ENCODE measurements at regions of chr7 and their contacts with region 1.

Region 1: DNA sequence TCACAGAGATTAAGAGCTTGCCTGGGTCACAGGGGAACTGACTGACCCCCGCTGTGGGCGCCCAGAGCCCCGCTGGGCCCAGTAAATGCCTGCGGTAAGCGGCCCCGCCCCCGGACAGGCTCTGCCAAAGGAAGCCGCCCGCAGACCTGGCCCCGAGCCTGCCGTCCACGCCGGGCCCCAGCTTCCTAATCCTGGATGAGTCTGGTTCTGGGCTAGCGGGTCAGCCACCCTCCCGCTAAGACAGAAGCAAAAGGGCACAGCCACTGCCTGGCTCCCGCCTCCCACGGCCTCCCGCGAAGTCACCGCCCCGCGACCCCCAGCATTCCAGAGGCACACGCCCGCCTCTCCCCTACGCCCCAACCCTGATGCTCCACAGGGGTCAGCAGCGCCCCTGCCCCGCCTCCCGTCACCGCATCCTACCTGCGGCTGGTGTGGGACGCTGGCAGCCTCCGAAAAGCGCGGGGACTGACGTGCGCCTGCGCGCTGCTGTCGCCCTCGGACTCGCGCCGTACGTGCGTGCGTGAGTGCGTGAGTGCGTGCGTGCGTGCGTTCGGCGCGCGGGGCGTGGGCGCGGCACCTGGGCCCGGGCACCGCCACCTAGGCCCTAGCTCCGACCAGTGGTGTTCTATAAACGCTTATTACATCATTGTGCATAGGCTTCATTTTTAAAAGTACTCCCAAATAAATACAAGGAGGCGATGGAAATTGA is at the start of gene FIGNL1:
- DNase-seq: peak; percentile 90
- H3K4me3 Mint-ChIP-seq: peak within 1 kb of the TSS; percentile 92
- H3K27ac Mint-ChIP-seq: peak within 1 kb of the TSS; percentile 91
- H3K4me1 Mint-ChIP-seq: peaks cover 48% of the 10 kb centered on the region
- H3K27me3 Mint-ChIP-seq: no peaks in the 10 kb centered on the region
- total RNA-seq, gene FIGNL1: 46.2 to 49.0 TPM

Region 2: GRCh38 chr7:50092579-50093491 is 357.2 kb before region 1 on chr7 and contains the start of gene ZPBP:
- CTCF ChIA-PET with region 1: interaction called, 5 read pairs
- POLR2A ChIA-PET with region 1: no interaction called
- intact Hi-C with region 1: loop called (anchors 1 kb)
- DNase-seq: peak; percentile 59
- H3K4me3 Mint-ChIP-seq: peak within 1 kb of the TSS; percentile 75
- H3K27ac Mint-ChIP-seq: peak within 1 kb of the TSS; percentile 62
- H3K4me1 Mint-ChIP-seq: peaks cover 8% of the 10 kb centered on the region
- H3K27me3 Mint-ChIP-seq: no peaks in the 10 kb centered on the region
- total RNA-seq, gene ZPBP: not detected

Region 3: DNA sequence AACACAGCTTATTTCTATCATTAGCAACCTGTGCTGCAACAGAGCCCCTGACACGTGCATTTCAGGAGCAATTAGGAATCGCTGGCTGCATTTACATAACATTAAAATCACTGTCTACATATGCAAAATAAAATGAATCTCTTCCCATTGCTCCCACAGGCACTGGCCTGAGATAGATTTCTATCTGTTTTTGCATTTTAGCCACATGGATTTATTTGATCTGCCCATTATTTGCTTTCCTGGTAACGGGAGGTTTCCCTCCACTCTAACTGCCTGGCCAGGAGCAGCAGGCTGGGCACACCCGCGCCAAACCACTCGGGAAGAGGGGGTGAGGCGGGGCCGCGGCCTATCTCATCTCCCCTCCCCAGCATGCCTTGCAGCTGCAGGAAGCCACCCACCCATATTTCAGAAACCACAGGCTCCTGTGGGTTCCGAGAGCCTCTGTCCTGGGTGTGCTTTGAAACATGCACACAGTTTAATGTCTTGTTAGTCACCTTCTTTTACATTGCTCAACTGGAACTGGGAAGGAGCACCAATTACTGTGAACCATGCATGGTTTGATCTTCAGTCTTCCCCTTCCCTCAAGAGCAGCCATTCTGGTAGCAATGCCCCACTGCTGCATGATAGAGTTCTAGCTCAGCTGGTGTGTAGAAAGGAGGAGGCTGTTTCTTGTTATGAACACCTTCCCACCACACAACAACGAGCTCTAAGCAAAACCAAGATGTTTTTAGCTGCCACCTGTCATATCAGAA is 183.2 kb before region 1 on chr7:
- CTCF ChIA-PET with region 1: no interaction called
- POLR2A ChIA-PET with region 1: no interaction called
- intact Hi-C with region 1: loop called (anchors 5 kb)
- DNase-seq: peak; percentile 90
- H3K4me3 Mint-ChIP-seq: peak overlapping the region; percentile 64
- H3K27ac Mint-ChIP-seq: peak overlapping the region; percentile 96
- H3K4me1 Mint-ChIP-seq: peaks cover 96% of the 10 kb centered on the region
- H3K27me3 Mint-ChIP-seq: no peaks in the 10 kb centered on the region

Region 4: DNA sequence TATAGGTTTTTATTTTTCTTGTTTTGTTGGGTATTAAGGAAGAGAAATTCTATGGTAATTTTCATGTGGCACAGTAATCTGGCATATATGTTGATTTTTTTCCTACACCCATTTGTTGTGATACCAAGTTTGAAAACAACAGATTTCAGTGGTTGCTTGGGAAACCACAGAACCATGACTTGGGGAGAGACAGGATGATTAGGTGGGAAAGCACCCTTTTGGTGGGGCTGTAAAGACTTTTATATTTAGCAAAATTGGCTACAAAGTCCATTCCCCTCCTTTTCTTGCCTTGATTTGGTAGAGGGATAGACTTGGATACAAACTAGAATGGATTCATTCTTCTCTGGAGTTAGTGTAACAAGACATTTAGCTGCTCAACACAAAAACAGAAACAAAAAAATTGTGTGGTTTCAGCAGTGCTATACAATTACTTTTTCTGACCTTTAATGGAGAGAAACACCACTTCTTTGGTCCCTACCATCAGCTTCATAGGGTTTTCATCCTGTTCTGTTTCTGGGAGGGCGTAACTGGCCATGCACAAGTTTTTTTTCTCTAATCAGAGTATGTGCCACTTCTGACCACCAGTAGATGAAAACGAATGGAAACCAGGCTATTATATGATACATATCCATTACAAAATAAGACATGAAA is 52.6 kb before region 1 on chr7:
- CTCF ChIA-PET with region 1: no interaction called
- POLR2A ChIA-PET with region 1: interaction called, 4 read pairs
- intact Hi-C with region 1: loop called (anchors 1 kb)
- DNase-seq: peak; percentile 50
- H3K4me3 Mint-ChIP-seq: peak overlapping the region; percentile 20
- H3K27ac Mint-ChIP-seq: peak overlapping the region; percentile 84
- H3K4me1 Mint-ChIP-seq: peaks cover 79% of the 10 kb centered on the region
- H3K27me3 Mint-ChIP-seq: no peaks in the 10 kb centered on the region

Region 5: DNA sequence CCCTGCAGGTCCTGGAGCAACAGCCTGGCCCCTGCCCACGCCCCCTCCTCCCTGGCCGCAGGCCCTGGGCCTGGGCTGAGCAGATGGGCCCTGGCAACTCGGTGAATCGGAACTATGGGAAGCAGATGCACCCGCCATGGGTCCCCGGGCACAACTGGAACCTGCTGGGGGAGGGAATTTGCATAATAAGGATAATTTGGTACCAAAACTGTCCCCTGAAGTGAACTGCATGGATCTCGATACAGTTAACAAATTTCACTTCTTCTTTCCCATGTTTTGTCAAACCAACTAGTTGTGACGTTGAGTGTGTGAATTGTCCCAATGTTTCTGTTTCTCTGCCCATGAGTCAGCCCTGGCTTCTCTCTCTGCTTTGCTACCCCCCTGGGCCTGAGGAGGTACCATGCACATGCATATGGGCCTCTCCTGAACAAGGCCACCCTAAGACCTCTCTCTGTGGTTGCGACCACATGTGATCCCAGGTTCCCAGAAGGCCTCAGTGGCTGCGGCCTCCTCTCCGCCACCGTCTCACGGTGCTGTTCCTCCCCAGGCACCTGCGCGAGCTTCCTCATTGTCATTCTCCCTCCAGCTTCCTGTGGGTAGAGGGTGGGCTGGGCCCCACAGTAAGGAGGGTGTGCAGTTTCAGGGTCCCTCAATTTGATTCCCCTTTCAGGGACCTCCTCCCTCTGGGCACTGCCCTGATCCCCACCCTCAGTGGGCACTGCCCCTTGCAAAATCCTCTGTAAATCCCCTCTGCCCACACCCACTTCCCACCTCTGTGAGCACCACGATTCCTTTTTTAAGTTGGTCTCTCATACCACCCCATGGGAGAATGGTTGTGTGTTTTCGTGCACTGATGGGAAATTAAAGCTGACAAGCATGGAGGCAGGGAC is 39.9 kb before region 1 on chr7:
- CTCF ChIA-PET with region 1: no interaction called
- POLR2A ChIA-PET with region 1: no interaction called
- intact Hi-C with region 1: no loop called
- DNase-seq: no peak
- H3K4me3 Mint-ChIP-seq: no peak overlapping the region
- H3K27ac Mint-ChIP-seq: no peak overlapping the region
- H3K4me1 Mint-ChIP-seq: peaks cover 44% of the 10 kb centered on the region
- H3K27me3 Mint-ChIP-seq: no peaks in the 10 kb centered on the region

Region 6: GRCh38 chr7:50534690-50535290 is 84.8 kb after region 1 on chr7:
- CTCF ChIA-PET with region 1: no interaction called
- POLR2A ChIA-PET with region 1: no interaction called
- intact Hi-C with region 1: loop called (anchors 1 kb)
- DNase-seq: peak; percentile 33
- H3K4me3 Mint-ChIP-seq: no peak overlapping the region
- H3K27ac Mint-ChIP-seq: no peak overlapping the region
- H3K4me1 Mint-ChIP-seq: peaks cover 27% of the 10 kb centered on the region
- H3K27me3 Mint-ChIP-seq: peaks cover 7% of the 10 kb centered on the region

Region 7: DNA sequence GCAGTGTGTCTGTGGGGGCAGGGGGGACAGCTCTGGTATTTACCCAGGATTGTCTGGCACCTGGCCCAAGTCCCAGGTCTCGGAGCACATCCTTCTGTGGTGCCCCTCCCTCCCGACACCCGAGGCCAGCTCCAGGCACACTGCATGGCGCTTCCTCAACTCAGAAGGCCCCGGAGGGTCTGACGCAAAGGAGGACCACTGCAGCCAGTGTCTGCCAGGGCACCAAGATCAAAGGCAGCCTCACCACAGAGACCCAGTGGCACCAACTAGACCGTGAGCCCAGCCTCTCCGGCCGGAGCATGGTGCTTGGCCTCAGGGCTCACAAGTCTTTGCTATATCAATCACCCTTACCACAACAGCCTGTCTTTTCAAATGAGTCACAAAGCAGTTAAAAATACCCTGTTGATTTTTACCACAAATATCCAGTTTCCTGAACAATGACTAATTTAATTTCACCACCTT is 214.5 kb after region 1 on chr7:
- CTCF ChIA-PET with region 1: no interaction called
- POLR2A ChIA-PET with region 1: no interaction called
- intact Hi-C with region 1: loop called (anchors 1 kb)
- DNase-seq: peak; percentile 60
- H3K4me3 Mint-ChIP-seq: no peak overlapping the region
- H3K27ac Mint-ChIP-seq: no peak overlapping the region
- H3K4me1 Mint-ChIP-seq: peaks cover 66% of the 10 kb centered on the region
- H3K27me3 Mint-ChIP-seq: peaks cover 2% of the 10 kb centered on the region

Region 8: GRCh38 chr7:51123322-51124029 is 673.4 kb after region 1 on chr7:
- CTCF ChIA-PET with region 1: no interaction called
- POLR2A ChIA-PET with region 1: no interaction called
- intact Hi-C with region 1: loop called (anchors 1 kb)
- DNase-seq: peak; percentile 92
- H3K4me3 Mint-ChIP-seq: peak overlapping the region; percentile 53
- H3K27ac Mint-ChIP-seq: peak overlapping the region; percentile 96
- H3K4me1 Mint-ChIP-seq: peaks cover 40% of the 10 kb centered on the region
- H3K27me3 Mint-ChIP-seq: peaks cover 1% of the 10 kb centered on the region

Measured in activated CD4-positive, alpha-beta memory T cell treated with anti-CD3 and anti-CD28 coated beads for 36 hours (primary cell).